ENCODE measurements at regions of chr1 and their contacts with region 1.

Region 1: DNA sequence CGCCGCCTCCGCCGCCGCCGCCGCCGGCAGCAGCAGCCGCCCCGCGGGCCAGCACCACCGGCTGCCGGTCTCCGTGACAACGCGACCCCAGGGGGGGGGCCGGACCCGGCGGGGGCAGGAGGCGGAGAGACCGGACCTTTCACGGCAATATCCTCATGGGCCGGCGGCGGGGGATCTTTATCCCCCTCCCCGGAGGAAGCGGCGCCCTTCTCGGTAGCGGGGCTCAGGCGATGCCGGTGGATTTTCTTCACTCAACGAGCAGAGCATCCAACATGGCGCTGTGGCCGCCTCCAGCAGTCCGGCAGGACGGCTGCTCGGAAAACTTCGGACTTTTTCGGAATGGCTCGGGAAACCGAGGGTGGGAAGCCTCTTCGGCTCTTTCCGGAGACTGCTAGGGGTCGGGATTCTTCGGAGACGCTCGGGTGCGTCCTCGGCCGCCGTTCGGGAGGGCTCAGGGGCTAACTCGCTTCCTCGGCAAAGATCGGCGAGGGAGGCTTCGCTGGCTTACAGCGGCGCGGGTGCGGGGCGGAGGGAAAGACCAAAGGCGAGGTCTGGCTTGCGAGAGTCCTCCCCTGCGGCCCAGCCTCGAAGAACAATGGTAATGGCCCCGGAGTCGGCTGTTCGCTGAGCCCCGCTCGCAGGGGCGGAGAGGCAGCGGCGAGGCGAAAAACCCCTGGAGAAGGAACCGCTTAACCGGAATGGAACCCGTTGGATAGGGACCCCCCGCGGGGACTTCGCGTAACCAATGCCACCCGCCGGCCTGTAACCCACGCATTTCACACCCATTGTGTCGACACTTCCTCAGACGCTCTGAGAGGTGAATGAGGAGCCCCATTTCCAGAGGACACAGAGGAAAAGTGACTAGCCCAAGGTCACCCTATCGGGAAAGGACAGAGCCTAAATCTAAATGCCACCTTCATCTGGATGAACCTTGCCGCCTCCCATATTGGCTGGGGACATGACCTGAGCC is at the start of gene EIF4G3:
- DNase-seq: peak; percentile 96 to 100 (median 99)
- ATAC-seq: peak; percentile 96
- H3K4me3 ChIP-seq: peak within 1 kb of the TSS; percentile 87
- H3K4me3 Mint-ChIP-seq: peak within 1 kb of the TSS; percentile 83 to 97 (median 91)
- H3K27ac ChIP-seq: peak within 1 kb of the TSS; percentile 75
- H3K27ac Mint-ChIP-seq: peak within 1 kb of the TSS; percentile 87 to 95 (median 92)
- H3K4me1 ChIP-seq: peaks cover 8 to 9% of the 10 kb centered on the region in 2 donors
- H3K4me1 Mint-ChIP-seq: peaks cover 11 to 28% (median 19%) of the 10 kb centered on the region in 7 donors
- H3K27me3 ChIP-seq: no peaks in the 10 kb centered on the region
- H3K27me3 Mint-ChIP-seq: peaks cover 0 to 10% (median 0%) of the 10 kb centered on the region in 5 donors
- total RNA-seq, gene EIF4G3: 15.0 to 46.3 (median 29.1) TPM

Region 2: GRCh38 chr1:20507564-20508410 is 669.1 kb before region 1 on chr1 and contains the start of gene MUL1:
- CTCF ChIA-PET with region 1: no interaction called
- POLR2A ChIA-PET with region 1: no interaction called
- intact Hi-C with region 1: loop called in 1 of 2 experiments (anchors 2 kb)
- DNase-seq: peak; percentile 83 to 95 (median 89)
- ATAC-seq: peak; percentile 94
- H3K4me3 ChIP-seq: peak within 1 kb of the TSS; percentile 88
- H3K4me3 Mint-ChIP-seq: peak within 1 kb of the TSS; percentile 83 to 98 (median 88)
- H3K27ac ChIP-seq: peak within 1 kb of the TSS; percentile 97
- H3K27ac Mint-ChIP-seq: peak within 1 kb of the TSS; percentile 72 to 97 (median 92)
- H3K4me1 ChIP-seq: peaks cover 8 to 22% of the 10 kb centered on the region in 2 donors
- H3K4me1 Mint-ChIP-seq: peaks cover 15 to 40% (median 23%) of the 10 kb centered on the region in 7 donors
- H3K27me3 ChIP-seq: no peaks in the 10 kb centered on the region
- H3K27me3 Mint-ChIP-seq: peaks cover 0 to 5% (median 1%) of the 10 kb centered on the region in 5 donors
- total RNA-seq, gene MUL1: 16.5 to 21.5 (median 20.5) TPM

Region 3: GRCh38 chr1:20661207-20662109 is 515.4 kb before region 1 on chr1 and contains the start of gene DDOST:
- CTCF ChIA-PET with region 1: no interaction called
- POLR2A ChIA-PET with region 1: no interaction called
- intact Hi-C with region 1: loop called (anchors 1 kb)
- DNase-seq: peak; percentile 78 to 96 (median 94)
- ATAC-seq: peak; percentile 98
- H3K4me3 ChIP-seq: peak within 1 kb of the TSS; percentile 93
- H3K4me3 Mint-ChIP-seq: peak within 1 kb of the TSS; percentile 89 to 99 (median 96)
- H3K27ac ChIP-seq: peak within 1 kb of the TSS; percentile 87
- H3K27ac Mint-ChIP-seq: peak within 1 kb of the TSS; percentile 85 to 99 (median 98)
- H3K4me1 ChIP-seq: peaks cover 21 to 24% of the 10 kb centered on the region in 2 donors
- H3K4me1 Mint-ChIP-seq: peaks cover 31 to 60% (median 41%) of the 10 kb centered on the region in 7 donors
- H3K27me3 ChIP-seq: no peaks in the 10 kb centered on the region
- H3K27me3 Mint-ChIP-seq: no peaks in the 10 kb centered on the region
- total RNA-seq, gene DDOST: 96.9 to 173 (median 109) TPM

Region 4: DNA sequence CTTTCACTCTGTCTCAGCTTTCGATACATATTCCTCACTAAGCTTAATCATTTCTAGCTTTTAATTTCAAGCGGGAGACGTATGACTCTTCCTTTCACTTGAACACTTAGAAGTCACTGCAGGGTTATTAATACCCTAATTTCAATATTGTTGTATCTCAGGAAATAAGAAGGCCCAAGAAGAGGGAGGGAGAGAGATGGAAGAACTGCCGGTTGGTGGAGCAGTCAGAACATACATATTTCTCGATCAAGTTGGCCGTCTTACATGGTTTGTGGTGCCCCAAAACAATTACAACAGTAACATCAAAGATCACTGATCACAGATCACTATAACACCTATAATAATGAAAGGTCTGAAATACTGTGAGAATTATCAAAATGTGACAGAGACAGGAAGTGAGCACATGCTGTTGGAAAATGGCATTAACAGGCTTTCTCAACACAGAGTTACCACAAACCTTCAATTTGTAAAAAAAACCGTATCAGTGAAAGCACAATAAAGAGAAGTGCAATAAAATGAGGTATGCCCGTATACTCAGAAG is 244.4 kb before region 1 on chr1:
- CTCF ChIA-PET with region 1: no interaction called
- POLR2A ChIA-PET with region 1: no interaction called
- intact Hi-C with region 1: loop called in 1 of 2 experiments (anchors 10 kb)
- DNase-seq: no peak
- ATAC-seq: peak; percentile 64
- H3K4me3 ChIP-seq: no peak overlapping the region
- H3K4me3 Mint-ChIP-seq: peak overlapping the region in 2 of 10 donors; percentile 1 to 54
- H3K27ac ChIP-seq: no peak overlapping the region
- H3K27ac Mint-ChIP-seq: peak overlapping the region in 5 of 9 donors; percentile 15 to 74 (median 56)
- H3K4me1 ChIP-seq: peaks cover 10 to 15% of the 10 kb centered on the region in 2 donors
- H3K4me1 Mint-ChIP-seq: peaks cover 11 to 24% (median 16%) of the 10 kb centered on the region in 7 donors
- H3K27me3 ChIP-seq: no peaks in the 10 kb centered on the region
- H3K27me3 Mint-ChIP-seq: no peaks in the 10 kb centered on the region

Region 5: DNA sequence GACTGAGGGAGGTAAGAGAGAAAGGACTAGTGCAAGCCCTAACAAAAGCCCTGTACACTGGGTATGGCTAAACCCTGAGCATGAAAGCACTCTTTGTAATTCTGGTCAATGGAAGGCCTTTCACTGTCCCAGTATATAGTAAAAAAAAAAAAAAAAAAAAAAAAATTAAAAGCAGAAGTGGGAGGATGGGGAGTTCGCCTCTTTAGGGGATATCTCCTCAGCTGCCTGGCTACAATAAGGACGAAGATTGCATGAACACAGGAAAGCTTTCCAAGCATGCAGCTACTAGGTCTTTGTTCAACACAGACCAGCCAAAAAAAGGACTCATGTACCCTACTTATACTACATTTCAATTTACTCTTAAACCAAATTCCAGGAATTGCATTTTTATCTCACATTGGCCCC is 59.3 kb before region 1 on chr1:
- CTCF ChIA-PET with region 1: no interaction called
- POLR2A ChIA-PET with region 1: no interaction called
- intact Hi-C with region 1: no loop called
- DNase-seq: no peak
- ATAC-seq: no peak
- H3K4me3 ChIP-seq: no peak overlapping the region
- H3K4me3 Mint-ChIP-seq: no peak overlapping the region
- H3K27ac ChIP-seq: no peak overlapping the region
- H3K27ac Mint-ChIP-seq: no peak overlapping the region
- H3K4me1 ChIP-seq: no peaks in the 10 kb centered on the region
- H3K4me1 Mint-ChIP-seq: no peaks in the 10 kb centered on the region
- H3K27me3 ChIP-seq: no peaks in the 10 kb centered on the region
- H3K27me3 Mint-ChIP-seq: no peaks in the 10 kb centered on the region

Region 6: GRCh38 chr1:21294266-21294989 is 117.6 kb after region 1 on chr1:
- CTCF ChIA-PET with region 1: no interaction called
- POLR2A ChIA-PET with region 1: interaction called, 3 read pairs
- intact Hi-C with region 1: loop called in 1 of 2 experiments (anchors 5 kb)
- DNase-seq: peak; percentile 57 to 95 (median 91)
- ATAC-seq: peak; percentile 87
- H3K4me3 ChIP-seq: peak overlapping the region; percentile 69
- H3K4me3 Mint-ChIP-seq: peak overlapping the region; percentile 81 to 97 (median 93)
- H3K27ac ChIP-seq: peak overlapping the region; percentile 94
- H3K27ac Mint-ChIP-seq: peak overlapping the region; percentile 91 to 100 (median 98)
- H3K4me1 ChIP-seq: peaks cover 60 to 62% of the 10 kb centered on the region in 2 donors
- H3K4me1 Mint-ChIP-seq: peaks cover 50 to 91% (median 84%) of the 10 kb centered on the region in 7 donors
- H3K27me3 ChIP-seq: no peaks in the 10 kb centered on the region
- H3K27me3 Mint-ChIP-seq: no peaks in the 10 kb centered on the region

Region 7: GRCh38 chr1:21318714-21319159 is 141.9 kb after region 1 on chr1:
- CTCF ChIA-PET with region 1: no interaction called
- POLR2A ChIA-PET with region 1: no interaction called
- intact Hi-C with region 1: no loop called
- DNase-seq: no peak
- ATAC-seq: no peak
- H3K4me3 ChIP-seq: no peak overlapping the region
- H3K4me3 Mint-ChIP-seq: peak overlapping the region in 1 of 10 donors; percentile 31
- H3K27ac ChIP-seq: no peak overlapping the region
- H3K27ac Mint-ChIP-seq: no peak overlapping the region
- H3K4me1 ChIP-seq: peaks cover 6 to 23% of the 10 kb centered on the region in 2 donors
- H3K4me1 Mint-ChIP-seq: peaks cover 28 to 71% (median 59%) of the 10 kb centered on the region in 7 donors
- H3K27me3 ChIP-seq: no peaks in the 10 kb centered on the region
- H3K27me3 Mint-ChIP-seq: no peaks in the 10 kb centered on the region